Caco-2 (cell line): ENCODE measurements at regions of chr20 and their contacts with region 1.

Region 1: DNA sequence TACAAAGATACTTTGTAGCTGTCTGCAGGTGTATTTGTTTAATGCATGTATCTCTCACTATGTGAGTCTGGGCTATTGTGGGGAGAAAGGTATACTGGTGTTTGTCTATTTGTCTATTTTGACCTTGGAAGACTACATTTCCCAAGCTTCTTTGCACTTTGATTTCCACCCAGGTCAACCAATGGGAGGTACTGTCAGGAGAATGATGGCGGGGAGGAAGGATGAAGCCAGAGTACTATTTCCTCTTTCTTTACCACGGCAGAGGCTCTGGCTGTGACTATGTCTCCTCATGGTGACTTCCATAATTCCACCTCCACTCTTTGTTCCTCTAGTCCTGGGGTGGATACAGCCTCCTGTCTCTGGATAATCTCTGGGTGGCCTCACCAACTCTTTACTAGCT is 23.1 kb downstream of the LBP start:
- DNase-seq: peak in 1 of 2 experiments; percentile 46
- H3K4me3 ChIP-seq: 0 out of 2 replicates have a peak overlapping the region, but pooled peaks have one; percentile 3
- H3K4me3 Mint-ChIP-seq: peak overlapping the region; percentile 19
- H3K27ac Mint-ChIP-seq: no peak overlapping the region
- H3K4me1 ChIP-seq: peaks cover 15% of the 10 kb centered on the region
- H3K4me1 Mint-ChIP-seq: peaks cover 11% of the 10 kb centered on the region
- H3K27me3 ChIP-seq: no peaks in the 10 kb centered on the region
- H3K27me3 Mint-ChIP-seq: no peaks in the 10 kb centered on the region
- CTCF ChIP-seq: no peak

Region 2: GRCh38 chr20:38387953-38388352 is 18.6 kb after region 1 on chr20:
- CTCF ChIA-PET with region 1: interaction called, 3 read pairs
- POLR2A ChIA-PET with region 1: no interaction called
- intact Hi-C with region 1: loop called (anchors 2 kb)
- DNase-seq: peak in 1 of 2 experiments; percentile 20
- H3K4me3 ChIP-seq: no peak overlapping the region
- H3K4me3 Mint-ChIP-seq: no peak overlapping the region
- H3K27ac Mint-ChIP-seq: no peak overlapping the region
- H3K4me1 ChIP-seq: no peaks in the 10 kb centered on the region
- H3K4me1 Mint-ChIP-seq: no peaks in the 10 kb centered on the region
- H3K27me3 ChIP-seq: peaks cover 2% of the 10 kb centered on the region; the same call in 1 of the 2 replicates
- H3K27me3 Mint-ChIP-seq: no peaks in the 10 kb centered on the region
- CTCF ChIP-seq: peak in 1 of 2 experiments; percentile 30

Region 3: DNA sequence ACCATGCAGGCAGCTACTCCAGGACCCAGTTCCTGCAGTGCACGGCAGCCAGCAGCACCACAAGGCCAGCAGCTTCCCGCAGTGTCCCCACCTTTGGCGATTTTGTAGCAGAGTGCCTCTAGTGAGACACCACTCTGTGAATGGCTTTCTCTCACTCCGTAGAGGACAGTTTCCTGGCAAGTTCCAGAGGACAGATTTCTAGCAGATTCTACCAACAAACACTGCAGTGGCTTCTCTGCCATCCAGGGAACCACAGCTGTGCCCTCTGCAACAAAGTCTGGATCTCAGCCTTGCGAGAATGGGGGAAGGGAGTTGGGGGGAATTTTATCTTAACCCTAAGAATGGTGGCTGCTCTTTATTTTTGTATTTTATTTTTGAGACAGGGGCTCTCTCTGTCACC is 37.1 kb after region 1 on chr20:
- CTCF ChIA-PET with region 1: interaction called, 20 read pairs
- POLR2A ChIA-PET with region 1: no interaction called
- intact Hi-C with region 1: loop called (anchors 1 kb)
- DNase-seq: peak in 1 of 2 experiments; percentile 33
- H3K4me3 ChIP-seq: no peak overlapping the region
- H3K4me3 Mint-ChIP-seq: no peak overlapping the region
- H3K27ac Mint-ChIP-seq: no peak overlapping the region
- H3K4me1 ChIP-seq: peaks cover 11% of the 10 kb centered on the region; the same call in 1 of the 2 replicates
- H3K4me1 Mint-ChIP-seq: peaks cover 13% of the 10 kb centered on the region
- H3K27me3 ChIP-seq: no peaks in the 10 kb centered on the region
- H3K27me3 Mint-ChIP-seq: no peaks in the 10 kb centered on the region
- CTCF ChIP-seq: no peak